IMR-90 (cell line): ENCODE measurements at regions of chr9 and their contacts with region 1.

Region 1: GRCh38 chr9:113657703-113658544 is 194.4 kb downstream of the RGS3 start:
- DNase-seq: peak; percentile 83
- ATAC-seq: peak; percentile 98
- H3K4me3 ChIP-seq: no peak overlapping the region
- H3K27ac ChIP-seq: no peak overlapping the region
- H3K4me1 ChIP-seq: peaks cover 5% of the 10 kb centered on the region
- H3K27me3 ChIP-seq: no peaks in the 10 kb centered on the region
- CTCF ChIP-seq: peak; percentile 97
- POLR2A ChIP-seq: 0 out of 2 replicates have a peak, but pooled peaks have one; percentile 49
- RAD21 ChIP-seq: peak; percentile 99

Region 2: DNA sequence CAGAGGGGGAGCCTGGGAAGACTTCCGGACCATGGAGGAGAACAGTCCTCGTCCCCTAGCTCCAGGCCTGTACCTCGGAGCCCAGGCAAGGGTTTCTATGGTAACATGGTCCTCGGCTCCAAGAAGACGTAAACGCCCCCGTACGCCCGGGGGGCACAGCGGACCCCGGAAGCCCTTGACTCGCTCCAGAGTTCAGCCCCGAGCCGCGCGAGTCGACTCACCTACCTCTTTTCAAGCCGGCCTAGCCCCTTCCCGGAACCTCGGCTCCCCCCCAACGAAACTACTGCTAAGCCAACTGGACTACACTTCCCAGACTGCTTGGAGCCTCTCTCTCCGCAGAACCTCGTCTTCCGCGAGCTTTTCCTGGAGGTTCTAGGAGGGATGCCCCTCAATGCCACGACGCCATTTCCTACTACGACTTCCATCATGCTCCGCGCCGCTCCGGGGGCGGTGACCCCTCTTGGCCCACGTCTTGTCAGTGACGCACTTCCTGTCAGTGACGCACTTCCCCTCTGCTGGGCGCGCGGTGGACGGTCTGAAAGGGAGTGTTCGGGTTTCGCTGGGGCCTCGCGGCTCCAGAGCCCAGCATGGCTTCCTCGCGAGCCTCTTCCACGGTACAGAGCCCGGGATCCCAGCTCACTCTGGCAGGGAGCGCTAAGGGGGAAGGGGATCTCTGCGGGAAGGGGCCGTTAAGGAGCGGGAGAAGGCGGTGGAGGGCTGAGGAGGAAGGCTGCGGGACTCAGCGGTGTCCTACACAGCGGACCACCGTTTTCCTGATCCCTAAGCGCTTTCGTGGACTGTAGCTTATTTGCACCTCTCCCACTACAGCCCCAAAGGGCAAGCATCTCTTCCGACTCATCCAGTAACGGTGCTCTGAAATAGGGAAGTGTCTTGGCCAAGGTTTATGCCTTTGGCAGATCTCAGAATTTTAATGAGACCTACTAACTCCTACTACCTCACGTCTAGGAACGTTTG is 382.5 kb before region 1 on chr9 and contains the starts of genes CDC26 and PRPF4:
- CTCF ChIA-PET with region 1: no interaction called
- POLR2A ChIA-PET with region 1: no interaction called
- dilution Hi-C with region 1: no loop called
- in situ Hi-C with region 1: no loop called
- intact Hi-C with region 1: loop called (anchors 10 kb)
- DNase-seq: peak; percentile 99
- ATAC-seq: peak; percentile 95
- H3K4me3 ChIP-seq: peak within 1 kb of the TSS; percentile 74
- H3K27ac ChIP-seq: peak within 1 kb of the TSS; percentile 88
- H3K4me1 ChIP-seq: peaks cover 2% of the 10 kb centered on the region; the same call in 1 of the 2 replicates
- H3K27me3 ChIP-seq: no peaks in the 10 kb centered on the region
- CTCF ChIP-seq: no peak
- POLR2A ChIP-seq: peak; percentile 97
- RAD21 ChIP-seq: no peak
- total RNA-seq, gene CDC26: 16.5 and 49.2 TPM in 2 replicates
- total RNA-seq, gene PRPF4: 32.5 and 38.0 TPM in 2 replicates

Region 3: DNA sequence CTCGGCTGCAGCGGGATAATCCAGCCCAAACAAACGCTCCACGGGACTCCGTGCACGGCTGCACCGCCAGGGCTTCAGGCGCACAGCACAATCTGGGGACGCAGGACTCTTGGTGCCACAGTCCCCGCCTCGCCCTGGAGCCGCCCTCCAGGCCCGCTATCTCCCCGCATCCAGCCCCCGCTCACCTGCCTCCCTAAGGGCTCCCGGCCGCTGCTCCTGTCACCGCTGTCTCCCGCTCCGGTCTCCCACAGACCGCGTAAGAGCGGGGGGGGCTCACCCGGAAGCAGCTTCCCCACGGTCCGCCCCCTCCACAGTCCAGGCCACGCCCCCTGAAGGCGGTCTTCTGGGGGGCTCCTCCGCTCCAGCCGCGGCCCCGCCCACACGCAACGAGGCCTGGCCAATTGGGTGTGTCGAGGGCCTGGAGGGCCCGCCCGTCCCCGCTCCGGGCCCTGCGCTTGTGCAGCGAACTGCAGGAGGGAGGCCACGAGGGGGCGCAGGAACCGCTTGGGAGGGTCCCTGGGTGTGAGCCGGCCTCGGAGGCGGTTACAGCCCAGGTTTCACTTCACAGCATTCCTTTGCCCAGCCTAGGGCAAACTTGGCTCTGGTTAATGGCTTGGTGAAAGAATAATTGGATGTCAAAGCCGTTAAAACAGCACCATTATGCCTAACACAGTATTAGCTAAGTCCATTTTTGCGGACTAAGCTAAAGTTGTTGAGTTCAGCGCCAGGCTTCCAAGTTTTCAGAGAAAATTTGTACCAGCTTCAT is 256.7 kb before region 1 on chr9 and contains the start of gene ALAD:
- CTCF ChIA-PET with region 1: interaction called, 4 read pairs
- POLR2A ChIA-PET with region 1: no interaction called
- dilution Hi-C with region 1: no loop called
- in situ Hi-C with region 1: no loop called
- intact Hi-C with region 1: loop called (anchors 1 kb)
- DNase-seq: peak; percentile 97
- ATAC-seq: peak; percentile 99
- H3K4me3 ChIP-seq: peak within 1 kb of the TSS; percentile 92
- H3K27ac ChIP-seq: peak within 1 kb of the TSS; percentile 45
- H3K4me1 ChIP-seq: peaks cover 8% of the 10 kb centered on the region
- H3K27me3 ChIP-seq: no peaks in the 10 kb centered on the region
- CTCF ChIP-seq: peak; percentile 98
- POLR2A ChIP-seq: no peak
- RAD21 ChIP-seq: peak; percentile 70
- total RNA-seq, gene ALAD: 10.3 and 11.1 TPM in 2 replicates

Region 4: DNA sequence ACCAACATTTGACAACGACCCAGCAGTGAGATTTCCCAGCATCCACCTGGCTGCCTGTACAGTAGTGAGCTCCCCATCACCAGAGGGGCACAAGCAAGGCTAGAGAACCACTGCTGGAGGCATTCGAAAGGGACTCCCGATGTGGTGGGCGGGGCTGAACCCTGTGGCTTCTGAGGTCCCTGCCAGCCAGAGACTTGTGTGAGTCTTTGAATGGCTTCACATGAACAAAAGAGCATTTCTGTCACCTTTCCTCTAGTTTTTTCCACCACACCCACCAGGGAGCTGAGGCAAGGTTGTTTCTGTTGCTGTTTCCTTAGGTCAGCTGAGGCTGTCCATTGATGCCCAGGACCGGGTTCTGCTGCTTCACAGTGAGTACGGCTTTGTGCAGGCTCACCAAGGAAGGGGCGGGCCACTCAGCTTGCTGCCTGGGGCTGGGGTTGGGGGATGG is 178.7 kb before region 1 on chr9:
- CTCF ChIA-PET with region 1: no interaction called
- POLR2A ChIA-PET with region 1: no interaction called
- dilution Hi-C with region 1: no loop called
- in situ Hi-C with region 1: no loop called
- intact Hi-C with region 1: no loop called
- DNase-seq: no peak
- ATAC-seq: no peak
- H3K4me3 ChIP-seq: no peak overlapping the region
- H3K27ac ChIP-seq: no peak overlapping the region
- H3K4me1 ChIP-seq: peaks cover 8% of the 10 kb centered on the region
- H3K27me3 ChIP-seq: no peaks in the 10 kb centered on the region
- CTCF ChIP-seq: no peak
- POLR2A ChIP-seq: no peak
- RAD21 ChIP-seq: no peak

Region 5: DNA sequence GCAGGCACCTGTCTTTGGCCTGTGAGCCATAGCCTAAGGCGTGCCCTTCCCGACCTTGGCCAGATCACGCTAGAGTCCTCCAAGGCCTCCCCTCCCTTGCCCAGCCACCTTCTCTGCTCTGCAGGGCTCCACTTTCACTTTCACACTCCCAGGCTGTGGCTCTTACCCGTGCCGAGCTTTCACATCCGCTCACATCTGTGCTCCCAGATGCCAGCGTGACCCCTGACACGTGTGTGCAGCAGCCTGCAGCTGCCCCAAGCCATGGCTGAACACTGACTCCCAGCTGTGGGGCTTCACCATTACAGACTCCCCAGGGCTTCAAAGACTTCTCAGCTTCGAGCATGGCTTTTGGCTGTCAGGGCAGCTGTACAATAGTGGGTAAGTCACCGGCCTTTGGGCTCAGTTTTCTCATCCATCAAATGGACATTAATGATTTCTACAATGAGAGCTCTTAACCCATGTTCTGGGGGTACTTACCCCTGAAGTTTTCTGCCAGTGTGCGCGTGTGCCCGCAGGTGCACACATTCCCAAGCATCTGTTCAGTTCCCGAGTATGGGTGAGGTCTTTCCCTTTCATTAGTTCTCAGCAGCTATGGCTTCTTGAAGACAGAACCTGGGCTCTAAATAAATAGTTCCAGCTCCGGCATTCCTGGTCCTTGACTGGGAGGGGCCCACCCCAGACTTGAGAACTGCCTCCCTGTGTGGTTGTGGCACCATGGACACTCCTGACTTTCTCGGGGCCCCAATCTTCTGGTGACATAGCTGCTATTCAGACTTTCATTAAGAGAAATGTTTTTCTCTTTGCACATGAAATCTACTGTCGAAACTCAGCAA is 75.8 kb before region 1 on chr9:
- CTCF ChIA-PET with region 1: interaction called, 10 read pairs
- POLR2A ChIA-PET with region 1: no interaction called
- dilution Hi-C with region 1: no loop called
- in situ Hi-C with region 1: no loop called
- intact Hi-C with region 1: no loop called
- DNase-seq: peak; percentile 84
- ATAC-seq: peak; percentile 27
- H3K4me3 ChIP-seq: no peak overlapping the region
- H3K27ac ChIP-seq: peak overlapping the region; percentile 32; the same call in 1 of the 2 replicates
- H3K4me1 ChIP-seq: peaks cover 40% of the 10 kb centered on the region
- H3K27me3 ChIP-seq: no peaks in the 10 kb centered on the region
- CTCF ChIP-seq: peak; percentile 47
- POLR2A ChIP-seq: no peak
- RAD21 ChIP-seq: peak; percentile 59